Dorsolateral prefrontal cortex (tissue), 120 donors: ENCODE measurements at regions of chr1 and their contacts with region 1.

Region 1: DNA sequence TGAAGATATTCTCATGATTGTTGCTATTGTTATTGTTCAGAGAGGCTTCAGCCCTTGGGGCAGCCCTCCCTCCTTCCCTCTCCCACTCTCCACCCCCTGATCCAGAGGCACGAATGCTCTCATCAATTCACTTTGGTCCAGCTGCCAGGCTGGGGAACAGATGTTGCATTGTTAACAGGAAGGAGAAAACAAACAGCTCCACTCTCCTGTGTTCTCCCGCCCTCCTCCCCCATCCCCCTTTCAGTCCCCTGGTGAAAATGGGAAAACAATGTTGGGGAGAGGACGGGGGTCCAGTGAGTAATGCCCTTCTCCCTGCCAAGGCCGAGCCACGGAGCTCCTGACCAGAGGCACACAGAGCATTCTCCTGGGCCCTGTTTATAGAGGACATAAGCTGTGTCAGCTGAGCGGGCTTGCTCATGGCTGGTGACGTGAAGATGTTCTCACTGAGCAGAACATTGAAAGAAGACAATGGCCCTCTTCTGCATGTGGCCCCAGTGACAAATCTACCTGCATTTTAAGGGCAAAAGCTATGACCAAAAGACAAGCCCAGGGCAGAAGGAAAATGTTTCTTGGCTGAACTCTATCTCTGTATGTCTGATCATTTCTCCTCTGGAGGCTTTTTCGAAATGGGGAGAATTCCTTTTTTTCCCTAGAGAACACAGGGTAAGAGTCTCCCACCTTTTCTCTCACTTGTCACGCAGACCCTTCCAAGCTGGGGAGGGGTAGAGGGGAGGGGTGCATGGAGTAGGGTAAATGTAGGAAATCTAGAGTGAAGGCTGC is 111.7 kb downstream of the GLUL start:
- DNase-seq: peak; percentile 18 to 97 (median 90)
- H3K4me3 ChIP-seq: peak overlapping the region in 3 of 59 donors; percentile 19 to 36 (median 28)
- H3K27ac ChIP-seq: peak overlapping the region in 58 of 59 donors; percentile 58 to 99 (median 96)
- H3K27me3 ChIP-seq: no peaks in the 10 kb centered on the region
- CTCF ChIP-seq: peak in 7 of 56 donors; percentile 4 to 37 (median 21)

Region 2: DNA sequence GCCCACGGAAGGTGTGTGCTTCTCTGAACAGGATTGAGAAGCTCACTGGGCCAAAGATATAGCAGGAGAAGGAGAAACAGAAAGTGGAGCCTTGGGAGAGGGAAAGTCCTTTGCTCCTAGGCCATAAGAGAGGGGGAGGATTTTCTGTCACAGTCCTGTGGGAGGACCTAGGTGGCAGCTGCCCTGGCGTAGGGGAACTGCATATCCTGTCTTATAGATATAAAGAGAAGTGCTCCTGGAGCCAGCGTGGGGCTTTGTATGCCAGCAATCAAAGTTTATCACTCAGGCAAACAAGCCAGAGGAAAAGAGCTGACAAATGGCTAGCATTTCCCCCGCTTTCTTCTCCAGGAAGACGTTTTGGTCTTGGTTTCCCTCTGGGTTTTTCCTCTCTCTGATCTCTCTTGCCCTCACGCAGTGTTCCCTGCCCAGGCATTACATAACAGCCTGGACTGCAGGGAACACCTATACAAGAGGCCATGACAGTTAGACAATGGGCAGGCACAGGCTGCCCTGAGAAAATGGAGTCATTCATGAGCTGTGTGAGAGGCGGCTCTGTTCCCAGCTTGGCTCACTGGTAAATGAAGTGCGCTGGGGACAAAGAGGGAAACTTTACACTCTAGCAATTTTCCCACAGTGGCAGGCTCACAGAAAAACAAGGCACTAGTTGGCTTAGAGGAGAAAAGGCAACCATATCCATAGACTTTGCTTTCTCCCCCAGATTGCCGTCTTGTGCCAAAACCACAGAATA is 165.9 kb before region 1 on chr1:
- intact Hi-C with region 1: loop called in 1 of 2 experiments (anchors 1 kb)
- DNase-seq: peak; percentile 14 to 92 (median 86)
- H3K4me3 ChIP-seq: peak overlapping the region in 39 of 59 donors; percentile 1 to 57 (median 26)
- H3K27ac ChIP-seq: peak overlapping the region; percentile 30 to 92 (median 82)
- H3K27me3 ChIP-seq: peaks cover 0 to 11% (median 0%) of the 10 kb centered on the region in 45 donors
- CTCF ChIP-seq: peak in 25 of 56 donors; percentile 5 to 45 (median 25)

Region 3: GRCh38 chr1:182235952-182236650 is 43.8 kb before region 1 on chr1:
- intact Hi-C with region 1: loop called in 1 of 2 experiments (anchors 2 kb)
- DNase-seq: peak in 6 of 10 donors; percentile 30 to 54 (median 41)
- H3K4me3 ChIP-seq: peak overlapping the region in 1 of 59 donors; percentile 12
- H3K27ac ChIP-seq: peak overlapping the region in 55 of 59 donors; percentile 8 to 86 (median 71)
- H3K27me3 ChIP-seq: no peaks in the 10 kb centered on the region
- CTCF ChIP-seq: no peak

Region 4: GRCh38 chr1:182391362-182392044 is 111.6 kb after region 1 on chr1 and contains the start of gene GLUL:
- intact Hi-C with region 1: loop called (anchors 1 to 2 kb)
- DNase-seq: peak; percentile 79 to 96 (median 93)
- H3K4me3 ChIP-seq: peak within 1 kb of the TSS; percentile 67 to 99 (median 92)
- H3K27ac ChIP-seq: peak within 1 kb of the TSS; percentile 92 to 100 (median 98)
- H3K27me3 ChIP-seq: peaks cover 0 to 4% (median 0%) of the 10 kb centered on the region in 45 donors
- CTCF ChIP-seq: peak in 16 of 56 donors; percentile 3 to 44 (median 14)
- total RNA-seq, gene GLUL: 1,265 to 6,769 (median 2,230) TPM

Region 5: GRCh38 chr1:182556279-182556678 is 276.4 kb after region 1 on chr1:
- intact Hi-C with region 1: no loop called
- DNase-seq: no peak
- H3K4me3 ChIP-seq: no peak overlapping the region
- H3K27ac ChIP-seq: no peak overlapping the region
- H3K27me3 ChIP-seq: no peaks in the 10 kb centered on the region
- CTCF ChIP-seq: no peak